ENCODE measurements at regions of chr17 and their contacts with region 1.

Region 1: DNA sequence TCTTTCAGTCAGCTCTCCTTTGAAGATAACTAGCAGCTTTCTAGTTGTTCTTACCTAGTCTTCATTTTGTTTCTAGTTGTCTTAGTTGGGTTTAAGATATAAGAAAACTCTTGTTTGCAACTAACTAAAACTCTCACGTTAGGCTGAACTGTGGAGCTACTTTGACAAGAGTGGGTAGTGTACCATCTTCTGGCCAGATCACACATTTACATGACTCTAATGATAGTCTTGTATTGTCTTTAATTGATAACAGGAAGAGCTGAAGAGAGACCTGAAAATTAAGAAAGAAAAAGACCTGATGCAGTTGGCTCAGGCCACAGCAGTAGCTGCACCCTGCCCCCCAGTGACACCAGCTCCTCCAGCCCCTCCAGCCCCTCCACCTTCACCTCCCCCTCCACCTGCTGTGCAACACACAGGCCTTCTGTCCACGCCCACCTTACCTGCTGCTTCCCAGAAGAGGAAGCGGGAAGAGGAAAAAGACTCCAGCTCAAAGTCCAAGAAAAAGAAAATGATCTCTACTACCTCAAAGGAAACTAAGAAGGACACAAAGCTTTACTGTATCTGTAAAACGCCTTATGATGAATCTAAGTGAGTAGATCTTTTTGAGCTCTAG is 36.9 kb downstream of the C17orf58 start:
- DNase-seq: no peak
- ATAC-seq: no peak
- H3K4me3 ChIP-seq: no peak overlapping the region
- H3K27ac ChIP-seq: no peak overlapping the region
- H3K4me1 ChIP-seq: no peaks in the 10 kb centered on the region
- H3K27me3 ChIP-seq: no peaks in the 10 kb centered on the region
- CTCF ChIP-seq: no peak
- POLR2A ChIP-seq: no peak

Region 2: GRCh38 chr17:68011199-68011665 is 51.8 kb after region 1 on chr17:
- in situ Hi-C with region 1: no loop called
- intact Hi-C with region 1: loop called (anchors 5 kb)
- DNase-seq: peak in 1 of 2 donors; percentile 28
- ATAC-seq: peak; percentile 54 to 82
- H3K4me3 ChIP-seq: no peak overlapping the region
- H3K27ac ChIP-seq: no peak overlapping the region
- H3K4me1 ChIP-seq: no peaks in the 10 kb centered on the region
- H3K27me3 ChIP-seq: no peaks in the 10 kb centered on the region
- CTCF ChIP-seq: peak in 4 of 5 experiments; percentile 53 to 70 (median 62)
- POLR2A ChIP-seq: no peak

Region 3: GRCh38 chr17:68101075-68101992 is 141.9 kb after region 1 on chr17:
- in situ Hi-C with region 1: no loop called
- intact Hi-C with region 1: loop called (anchors 2 kb)
- DNase-seq: peak; percentile 96
- ATAC-seq: peak; percentile 97 to 98
- H3K4me3 ChIP-seq: peak overlapping the region; percentile 79 to 99 (median 82)
- H3K27ac ChIP-seq: peak overlapping the region; percentile 86 to 97 (median 91)
- H3K4me1 ChIP-seq: peaks cover 13 to 14% of the 10 kb centered on the region in 2 donors
- H3K27me3 ChIP-seq: no peaks in the 10 kb centered on the region
- CTCF ChIP-seq: peak in 1 of 5 experiments; percentile 11
- POLR2A ChIP-seq: peak; percentile 84 to 95

Measured in gastrocnemius medialis (tissue), 4 donors.